ENCODE measurements at regions of chr17 and their contacts with region 1.

Region 1: GRCh38 chr17:17591355-17592298 is at the start of gene PEMT:
- DNase-seq: peak; percentile 81 to 98 (median 92)
- ATAC-seq: peak; percentile 90
- H3K4me3 ChIP-seq: peak within 1 kb of the TSS; percentile 72 to 88
- H3K4me3 Mint-ChIP-seq: peak within 1 kb of the TSS; percentile 94
- H3K27ac ChIP-seq: peak within 1 kb of the TSS; percentile 80 to 86
- H3K27ac Mint-ChIP-seq: peak within 1 kb of the TSS; percentile 95
- H3K4me1 ChIP-seq: peaks cover 20% of the 10 kb centered on the region
- H3K4me1 Mint-ChIP-seq: peaks cover 19% of the 10 kb centered on the region
- H3K27me3 ChIP-seq: no peaks in the 10 kb centered on the region
- H3K27me3 Mint-ChIP-seq: no peaks in the 10 kb centered on the region
- CTCF ChIP-seq: no peak
- total RNA-seq, gene PEMT: 14.7 to 15.4 TPM

Region 2: DNA sequence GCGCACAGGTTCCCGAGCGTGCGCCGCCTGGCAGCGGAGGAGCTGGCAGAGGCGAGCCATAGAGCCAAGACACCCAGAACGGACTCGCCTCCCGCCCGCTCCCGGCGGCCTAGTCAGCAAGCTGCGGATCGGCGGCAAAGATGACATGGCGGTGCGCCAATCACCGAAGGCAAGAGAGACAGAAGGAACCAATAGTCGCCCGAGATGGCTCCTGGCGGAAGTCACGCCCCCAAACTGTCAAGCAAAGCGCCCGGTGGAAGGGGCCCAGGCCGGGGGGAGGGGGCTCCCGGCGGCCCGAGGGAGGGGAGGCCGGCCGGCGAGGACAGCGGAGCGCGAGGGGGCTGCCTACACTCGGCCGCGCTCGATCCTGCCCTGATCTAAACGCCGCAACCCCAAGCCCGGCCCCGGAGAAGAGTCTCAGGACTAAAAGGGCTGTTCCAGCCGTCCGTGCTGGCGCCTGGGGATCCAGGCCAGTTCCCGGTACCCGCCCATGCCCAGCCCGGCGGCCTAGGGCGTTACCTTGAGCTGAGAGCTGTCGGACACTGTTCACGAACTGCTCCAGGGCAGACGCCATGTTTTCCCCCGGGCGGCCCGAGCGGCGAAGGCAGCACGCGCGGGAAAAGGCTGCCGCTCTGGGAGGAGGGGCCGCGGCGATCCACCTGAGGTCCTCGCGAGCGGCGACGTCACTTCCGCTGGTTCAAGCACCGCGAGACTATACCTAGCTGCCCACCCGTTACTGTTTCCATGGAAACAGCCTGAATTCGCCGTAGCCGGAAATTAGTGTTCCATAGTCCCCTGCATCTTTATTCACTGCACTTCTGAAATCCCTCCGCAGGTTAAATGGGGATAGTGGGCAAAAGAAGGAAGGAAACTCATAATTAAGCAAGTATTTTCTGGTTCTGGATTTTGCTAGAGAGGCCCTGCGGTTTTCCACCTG is 310.7 kb before region 1 on chr17 and contains the start of gene COPS3:
- CTCF ChIA-PET with region 1: no interaction called
- POLR2A ChIA-PET with region 1: no interaction called
- intact Hi-C with region 1: loop called (anchors 1 to 2 kb)
- DNase-seq: peak; percentile 91 to 99 (median 97)
- ATAC-seq: peak; percentile 88
- H3K4me3 ChIP-seq: peak within 1 kb of the TSS; percentile 74 to 93
- H3K4me3 Mint-ChIP-seq: peak within 1 kb of the TSS; percentile 96
- H3K27ac ChIP-seq: peak within 1 kb of the TSS; percentile 74 to 92
- H3K27ac Mint-ChIP-seq: peak within 1 kb of the TSS; percentile 87
- H3K4me1 ChIP-seq: peaks cover 26% of the 10 kb centered on the region
- H3K4me1 Mint-ChIP-seq: peaks cover 38% of the 10 kb centered on the region
- H3K27me3 ChIP-seq: no peaks in the 10 kb centered on the region
- H3K27me3 Mint-ChIP-seq: no peaks in the 10 kb centered on the region
- CTCF ChIP-seq: no peak
- total RNA-seq, gene COPS3: 94.1 to 96.3 TPM

Region 3: GRCh38 chr17:17295141-17295540 is 296.5 kb before region 1 on chr17:
- CTCF ChIA-PET with region 1: no interaction called
- POLR2A ChIA-PET with region 1: no interaction called
- intact Hi-C with region 1: no loop called
- DNase-seq: no peak
- ATAC-seq: no peak
- H3K4me3 ChIP-seq: no peak overlapping the region
- H3K4me3 Mint-ChIP-seq: no peak overlapping the region
- H3K27ac ChIP-seq: no peak overlapping the region
- H3K27ac Mint-ChIP-seq: no peak overlapping the region
- H3K4me1 ChIP-seq: no peaks in the 10 kb centered on the region
- H3K4me1 Mint-ChIP-seq: peaks cover under 1% of the 10 kb centered on the region
- H3K27me3 ChIP-seq: no peaks in the 10 kb centered on the region
- H3K27me3 Mint-ChIP-seq: peaks cover 2% of the 10 kb centered on the region
- CTCF ChIP-seq: no peak

Region 4: GRCh38 chr17:17476865-17477467 is 114.7 kb before region 1 on chr17 and contains the start of gene MED9:
- CTCF ChIA-PET with region 1: no interaction called
- POLR2A ChIA-PET with region 1: no interaction called
- intact Hi-C with region 1: loop called (anchors 2 kb)
- DNase-seq: peak; percentile 87 to 97 (median 95)
- ATAC-seq: peak; percentile 100
- H3K4me3 ChIP-seq: peak within 1 kb of the TSS; percentile 88 to 96
- H3K4me3 Mint-ChIP-seq: peak within 1 kb of the TSS; percentile 89
- H3K27ac ChIP-seq: peak within 1 kb of the TSS; percentile 83 to 89
- H3K27ac Mint-ChIP-seq: peak within 1 kb of the TSS; percentile 89
- H3K4me1 ChIP-seq: peaks cover 32% of the 10 kb centered on the region
- H3K4me1 Mint-ChIP-seq: peaks cover 46% of the 10 kb centered on the region
- H3K27me3 ChIP-seq: no peaks in the 10 kb centered on the region
- H3K27me3 Mint-ChIP-seq: no peaks in the 10 kb centered on the region
- CTCF ChIP-seq: no peak
- total RNA-seq, gene MED9: 35.4 to 35.9 TPM

Region 5: GRCh38 chr17:17613708-17614114 is 22.1 kb after region 1 on chr17:
- CTCF ChIA-PET with region 1: interaction called, 7 read pairs
- POLR2A ChIA-PET with region 1: no interaction called
- intact Hi-C with region 1: loop called in 1 of 2 experiments (anchors 1 kb)
- DNase-seq: peak in 8 of 9 experiments; percentile 14 to 70 (median 48)
- ATAC-seq: peak; percentile 94
- H3K4me3 ChIP-seq: no peak overlapping the region
- H3K4me3 Mint-ChIP-seq: no peak overlapping the region
- H3K27ac ChIP-seq: no peak overlapping the region
- H3K27ac Mint-ChIP-seq: no peak overlapping the region
- H3K4me1 ChIP-seq: no peaks in the 10 kb centered on the region
- H3K4me1 Mint-ChIP-seq: no peaks in the 10 kb centered on the region
- H3K27me3 ChIP-seq: no peaks in the 10 kb centered on the region
- H3K27me3 Mint-ChIP-seq: no peaks in the 10 kb centered on the region
- CTCF ChIP-seq: peak; percentile 64

Region 6: DNA sequence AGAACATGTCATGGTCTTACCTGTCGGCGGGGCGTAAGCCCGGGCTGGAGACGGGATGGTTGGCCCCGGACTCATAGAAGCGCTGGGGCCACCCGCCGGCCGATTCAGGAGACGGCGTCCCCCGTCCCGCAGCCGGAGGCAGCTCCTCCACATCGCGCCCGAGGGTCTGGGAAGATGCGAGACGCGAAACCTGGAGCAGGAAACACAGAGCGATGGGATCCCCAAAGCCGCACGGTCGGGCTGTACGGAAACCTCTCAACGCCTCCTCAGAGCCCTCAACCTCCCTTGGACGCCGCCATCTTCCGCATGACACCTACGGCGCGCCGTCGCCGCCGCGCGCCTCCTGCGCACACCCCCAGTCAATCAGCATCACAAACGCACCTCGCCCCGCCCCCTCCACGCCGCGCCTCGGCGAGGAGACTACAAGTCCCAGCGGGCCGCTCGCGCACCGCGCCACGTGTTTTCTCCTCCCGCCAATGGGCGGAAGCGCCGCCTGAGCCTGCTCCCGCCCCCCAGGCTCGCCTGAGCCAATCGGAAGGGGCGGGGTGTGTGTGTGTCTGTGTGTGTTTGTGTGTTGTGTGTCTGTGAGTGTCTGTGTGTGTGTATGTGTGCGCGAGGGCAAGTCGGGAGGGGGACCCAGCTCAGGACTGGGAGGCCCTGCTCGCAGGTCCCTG is 447.4 kb after region 1 on chr17 and contains the starts of genes ATPAF2 and GID4:
- CTCF ChIA-PET with region 1: no interaction called
- POLR2A ChIA-PET with region 1: no interaction called
- intact Hi-C with region 1: loop called in 1 of 2 experiments (anchors 1 kb)
- DNase-seq: peak; percentile 99 to 100 (median 100)
- ATAC-seq: peak; percentile 90
- H3K4me3 ChIP-seq: peak within 1 kb of the TSS; percentile 85 to 92
- H3K4me3 Mint-ChIP-seq: peak within 1 kb of the TSS; percentile 92
- H3K27ac ChIP-seq: peak within 1 kb of the TSS; percentile 63 to 84
- H3K27ac Mint-ChIP-seq: peak within 1 kb of the TSS; percentile 91
- H3K4me1 ChIP-seq: peaks cover 34% of the 10 kb centered on the region
- H3K4me1 Mint-ChIP-seq: peaks cover 56% of the 10 kb centered on the region
- H3K27me3 ChIP-seq: no peaks in the 10 kb centered on the region
- H3K27me3 Mint-ChIP-seq: no peaks in the 10 kb centered on the region
- CTCF ChIP-seq: no peak
- total RNA-seq, gene ATPAF2: 16.8 to 24.5 TPM
- total RNA-seq, gene GID4: 2.7 to 5.0 TPM

Region 7: GRCh38 chr17:18314731-18315561 is 723.3 kb after region 1 on chr17 and contains the starts of genes SMCR8 and TOP3A:
- CTCF ChIA-PET with region 1: no interaction called
- POLR2A ChIA-PET with region 1: no interaction called
- intact Hi-C with region 1: loop called in 1 of 2 experiments (anchors 2 kb)
- DNase-seq: peak; percentile 95 to 99 (median 97)
- ATAC-seq: peak; percentile 95
- H3K4me3 ChIP-seq: peak within 1 kb of the TSS; percentile 88 to 93
- H3K4me3 Mint-ChIP-seq: peak within 1 kb of the TSS; percentile 90
- H3K27ac ChIP-seq: peak within 1 kb of the TSS; percentile 98 to 99
- H3K27ac Mint-ChIP-seq: peak within 1 kb of the TSS; percentile 97
- H3K4me1 ChIP-seq: peaks cover 67% of the 10 kb centered on the region
- H3K4me1 Mint-ChIP-seq: peaks cover 76% of the 10 kb centered on the region
- H3K27me3 ChIP-seq: no peaks in the 10 kb centered on the region
- H3K27me3 Mint-ChIP-seq: no peaks in the 10 kb centered on the region
- CTCF ChIP-seq: no peak
- total RNA-seq, gene SMCR8: 51.9 to 53.1 TPM
- total RNA-seq, gene TOP3A: 28.8 to 30.9 TPM

Measured in CD8-positive, alpha-beta T cell (primary cell).